ENCODE measurements at regions of chr1 and their contacts with region 1.

Region 1: GRCh38 chr1:26417111-26417759 is 6.6 kb downstream of the LIN28A start:
- DNase-seq: peak; percentile 57
- H3K4me3 ChIP-seq: no peak overlapping the region
- H3K27ac ChIP-seq: no peak overlapping the region
- H3K4me1 ChIP-seq: no peaks in the 10 kb centered on the region
- H3K27me3 ChIP-seq: peaks cover 39 to 40% of the 10 kb centered on the region in 2 experiments
- CTCF ChIP-seq: peak; percentile 82 to 99
- POLR2A ChIP-seq: no peak

Region 2: GRCh38 chr1:26102526-26102925 is 314.7 kb before region 1 on chr1:
- CTCF ChIA-PET with region 1: interaction called, 15 read pairs
- POLR2A ChIA-PET with region 1: no interaction called
- dilution Hi-C with region 1: no loop called
- intact Hi-C with region 1: loop called (anchors 1 kb)
- DNase-seq: peak; percentile 68
- H3K4me3 ChIP-seq: no peak overlapping the region
- H3K27ac ChIP-seq: peak overlapping the region; percentile 62
- H3K4me1 ChIP-seq: peaks cover 30% of the 10 kb centered on the region
- H3K27me3 ChIP-seq: no peaks in the 10 kb centered on the region
- CTCF ChIP-seq: no peak
- POLR2A ChIP-seq: no peak

Region 3: GRCh38 chr1:26284597-26285360 is 132.5 kb before region 1 on chr1:
- CTCF ChIA-PET with region 1: interaction called, 43 read pairs
- POLR2A ChIA-PET with region 1: no interaction called
- dilution Hi-C with region 1: no loop called
- intact Hi-C with region 1: loop called (anchors 1 kb)
- DNase-seq: peak; percentile 83
- H3K4me3 ChIP-seq: no peak overlapping the region
- H3K27ac ChIP-seq: peak overlapping the region; percentile 19
- H3K4me1 ChIP-seq: peaks cover 26% of the 10 kb centered on the region
- H3K27me3 ChIP-seq: no peaks in the 10 kb centered on the region
- CTCF ChIP-seq: peak; percentile 55 to 93
- POLR2A ChIP-seq: peak; percentile 46

Region 4: DNA sequence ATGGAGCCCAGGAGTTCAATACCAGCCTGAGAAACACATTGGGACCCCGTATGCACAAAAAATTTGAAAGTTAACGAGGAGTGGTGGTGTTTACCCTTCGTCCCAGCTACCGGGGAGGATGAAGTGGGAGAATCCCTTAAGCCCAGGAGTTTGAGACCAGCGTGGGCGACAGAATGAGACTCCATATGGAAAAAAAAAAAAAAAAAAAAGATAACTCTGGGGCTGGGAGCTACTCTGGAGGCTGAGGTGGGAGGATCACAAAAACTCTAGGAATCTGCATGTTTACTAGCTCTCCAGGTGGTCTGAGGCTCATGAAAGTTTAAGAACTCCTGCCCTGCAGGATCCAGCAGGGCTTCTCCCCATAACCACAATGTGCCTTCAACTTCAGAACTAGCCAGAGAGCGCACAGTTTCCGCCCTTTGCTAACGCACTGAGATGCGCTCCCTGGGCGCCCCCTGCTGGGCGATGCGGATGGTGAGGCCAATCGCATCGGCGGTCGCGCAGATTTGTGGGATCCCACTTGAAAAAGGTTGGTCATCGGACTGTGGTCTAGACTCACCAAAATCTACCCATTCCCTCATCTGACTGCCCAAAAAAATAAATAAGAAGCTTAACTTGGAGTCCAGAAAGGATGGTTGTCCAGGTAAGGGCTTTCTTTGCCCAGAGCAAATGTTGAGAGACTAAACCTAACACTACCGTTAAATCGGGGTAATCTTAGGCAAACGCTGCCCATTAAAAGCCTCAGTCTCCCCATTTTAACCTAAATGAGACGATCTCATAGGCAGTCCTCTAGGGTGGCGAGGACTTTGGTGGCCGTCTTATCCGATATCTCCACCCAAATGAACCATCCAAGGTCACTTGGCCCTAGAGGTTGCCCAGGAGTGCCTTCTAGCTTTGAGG is 53.4 kb before region 1 on chr1:
- CTCF ChIA-PET with region 1: interaction called, 25 read pairs
- POLR2A ChIA-PET with region 1: no interaction called
- dilution Hi-C with region 1: no loop called
- intact Hi-C with region 1: no loop called
- DNase-seq: peak; percentile 67
- H3K4me3 ChIP-seq: no peak overlapping the region
- H3K27ac ChIP-seq: no peak overlapping the region
- H3K4me1 ChIP-seq: no peaks in the 10 kb centered on the region
- H3K27me3 ChIP-seq: peaks cover 18 to 23% of the 10 kb centered on the region in 2 experiments
- CTCF ChIP-seq: peak; percentile 96 to 99
- POLR2A ChIP-seq: no peak

Region 5: DNA sequence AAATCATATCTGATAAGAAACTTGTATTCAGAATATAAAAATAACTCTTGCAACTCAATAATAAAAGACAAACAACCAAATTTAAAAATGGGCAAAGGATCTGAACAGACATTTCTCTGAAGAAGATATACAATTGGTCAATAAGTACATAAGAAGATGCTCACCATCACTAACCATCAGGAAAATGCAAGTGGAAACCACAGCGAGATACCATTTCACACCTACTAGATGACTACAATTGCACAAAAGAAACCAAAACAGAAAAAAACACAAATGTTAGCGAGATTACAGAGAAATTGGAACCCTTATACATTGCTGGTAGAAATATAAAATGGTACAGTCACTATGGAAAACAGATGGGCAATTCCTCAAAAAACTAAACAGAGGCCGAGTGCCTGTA is 33.2 kb before region 1 on chr1:
- CTCF ChIA-PET with region 1: interaction called, 13 read pairs
- POLR2A ChIA-PET with region 1: no interaction called
- dilution Hi-C with region 1: no loop called
- intact Hi-C with region 1: no loop called
- DNase-seq: no peak
- H3K4me3 ChIP-seq: no peak overlapping the region
- H3K27ac ChIP-seq: no peak overlapping the region
- H3K4me1 ChIP-seq: no peaks in the 10 kb centered on the region
- H3K27me3 ChIP-seq: peaks cover 0 to 2% of the 10 kb centered on the region in 2 experiments
- CTCF ChIP-seq: no peak
- POLR2A ChIP-seq: no peak

Region 6: GRCh38 chr1:26438041-26438440 is 20.8 kb after region 1 on chr1:
- CTCF ChIA-PET with region 1: interaction called, 24 read pairs
- POLR2A ChIA-PET with region 1: no interaction called
- dilution Hi-C with region 1: no loop called
- intact Hi-C with region 1: no loop called
- DNase-seq: no peak
- H3K4me3 ChIP-seq: no peak overlapping the region
- H3K27ac ChIP-seq: no peak overlapping the region
- H3K4me1 ChIP-seq: peaks cover 10% of the 10 kb centered on the region
- H3K27me3 ChIP-seq: no peaks in the 10 kb centered on the region
- CTCF ChIP-seq: no peak
- POLR2A ChIP-seq: no peak

Region 7: DNA sequence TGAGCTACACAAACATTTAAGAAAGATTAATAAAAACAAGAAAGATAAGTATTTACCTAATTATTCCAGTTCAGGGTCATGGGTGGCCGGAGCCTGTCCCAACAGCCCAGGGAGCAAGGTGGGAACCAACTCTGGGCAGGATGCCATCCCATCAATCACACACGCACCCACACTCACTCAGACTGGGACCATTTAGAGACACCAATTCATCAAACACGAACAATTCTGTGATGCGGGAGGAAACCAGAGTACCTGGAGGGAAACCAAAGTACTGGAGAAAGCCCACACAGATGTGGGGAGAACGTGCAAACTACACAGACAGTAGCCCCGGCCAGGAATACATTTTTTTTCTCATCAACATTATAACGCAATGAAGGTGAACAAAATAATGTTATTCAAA is 1056.5 kb after region 1 on chr1:
- CTCF ChIA-PET with region 1: no interaction called
- POLR2A ChIA-PET with region 1: no interaction called
- dilution Hi-C with region 1: no loop called
- intact Hi-C with region 1: no loop called
- DNase-seq: no peak
- H3K4me3 ChIP-seq: no peak overlapping the region
- H3K27ac ChIP-seq: no peak overlapping the region
- H3K4me1 ChIP-seq: no peaks in the 10 kb centered on the region
- H3K27me3 ChIP-seq: no peaks in the 10 kb centered on the region
- CTCF ChIP-seq: no peak
- POLR2A ChIP-seq: no peak

Measured in endothelial cell of umbilical vein (primary cell).